Left ventricle myocardium superior (tissue), 1 donor: ENCODE measurements at regions of chr14 and their contacts with region 1.

Region 1: DNA sequence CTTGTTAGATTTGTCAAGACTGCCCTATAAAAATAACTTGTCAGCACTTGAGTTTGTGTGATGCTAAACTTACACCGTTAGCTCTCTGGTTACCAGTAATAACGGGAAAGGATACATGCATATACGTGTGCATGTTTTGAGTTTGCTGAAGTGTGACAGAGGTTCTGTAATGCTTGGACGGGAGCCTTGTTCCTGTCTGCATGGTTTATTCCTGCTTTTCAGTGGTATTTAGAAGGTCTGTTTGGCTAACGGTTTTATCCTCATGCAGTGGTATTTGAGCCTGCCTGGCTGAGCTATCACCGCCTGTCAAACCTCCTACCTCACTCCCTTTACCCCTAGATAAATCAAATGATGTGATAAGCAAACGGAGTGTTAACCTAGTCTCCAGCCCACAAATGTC is 305.6 kb downstream of the GALC start:
- DNase-seq: no peak
- ATAC-seq: no peak

Region 2: GRCh38 chr14:87725318-87725717 is 37.9 kb after region 1 on chr14:
- intact Hi-C with region 1: loop called (anchors 1 kb)
- DNase-seq: no peak
- ATAC-seq: no peak